PC-3 (cell line): ENCODE measurements at regions of chr6 and their contacts with region 1.

Region 1: DNA sequence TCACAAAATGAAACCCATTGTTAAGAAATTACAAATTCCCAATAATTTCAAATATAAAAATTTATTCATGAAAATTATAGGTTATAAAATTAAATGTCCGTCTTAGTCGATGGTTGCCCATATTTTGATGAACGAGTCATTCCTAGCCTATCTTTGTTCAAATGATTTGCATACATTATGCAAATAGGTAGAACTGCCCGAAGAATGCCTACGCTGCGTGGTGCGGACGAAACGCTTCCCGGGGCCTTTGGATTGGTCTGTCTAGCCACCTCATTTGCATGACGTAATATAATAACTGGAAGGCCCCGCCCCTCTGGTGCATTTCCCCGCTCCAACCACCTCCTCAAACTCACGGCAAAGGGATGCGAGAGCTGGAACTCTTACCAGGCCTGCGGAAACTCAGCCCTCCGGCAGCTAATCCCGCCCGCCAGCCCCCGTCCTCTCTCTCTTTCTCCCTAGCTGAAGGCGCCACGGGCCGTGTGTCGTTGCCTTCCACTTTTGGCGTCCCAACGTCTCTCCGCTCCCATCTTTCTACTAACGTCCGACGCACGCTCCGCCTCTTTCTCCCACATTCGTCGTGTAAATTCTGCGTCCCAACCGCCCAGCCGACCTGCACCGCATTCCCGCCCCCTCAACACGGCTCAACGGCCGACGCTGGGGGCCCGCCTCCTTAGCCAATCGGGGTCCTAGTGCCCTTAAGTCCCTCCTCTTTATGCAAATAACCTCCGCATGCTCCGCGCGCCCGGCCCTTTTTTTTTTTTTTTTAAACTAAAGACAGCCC is 520 bp upstream of the PRRC2A start:
- DNase-seq: peak; percentile 98
- ATAC-seq: peak; percentile 88
- H3K4me3 ChIP-seq: peak overlapping the region; percentile 99
- H3K27ac ChIP-seq: peak overlapping the region; percentile 91
- H3K4me1 ChIP-seq: peaks cover 17% of the 10 kb centered on the region
- H3K27me3 ChIP-seq: no peaks in the 10 kb centered on the region
- CTCF ChIP-seq: no peak

Region 2: DNA sequence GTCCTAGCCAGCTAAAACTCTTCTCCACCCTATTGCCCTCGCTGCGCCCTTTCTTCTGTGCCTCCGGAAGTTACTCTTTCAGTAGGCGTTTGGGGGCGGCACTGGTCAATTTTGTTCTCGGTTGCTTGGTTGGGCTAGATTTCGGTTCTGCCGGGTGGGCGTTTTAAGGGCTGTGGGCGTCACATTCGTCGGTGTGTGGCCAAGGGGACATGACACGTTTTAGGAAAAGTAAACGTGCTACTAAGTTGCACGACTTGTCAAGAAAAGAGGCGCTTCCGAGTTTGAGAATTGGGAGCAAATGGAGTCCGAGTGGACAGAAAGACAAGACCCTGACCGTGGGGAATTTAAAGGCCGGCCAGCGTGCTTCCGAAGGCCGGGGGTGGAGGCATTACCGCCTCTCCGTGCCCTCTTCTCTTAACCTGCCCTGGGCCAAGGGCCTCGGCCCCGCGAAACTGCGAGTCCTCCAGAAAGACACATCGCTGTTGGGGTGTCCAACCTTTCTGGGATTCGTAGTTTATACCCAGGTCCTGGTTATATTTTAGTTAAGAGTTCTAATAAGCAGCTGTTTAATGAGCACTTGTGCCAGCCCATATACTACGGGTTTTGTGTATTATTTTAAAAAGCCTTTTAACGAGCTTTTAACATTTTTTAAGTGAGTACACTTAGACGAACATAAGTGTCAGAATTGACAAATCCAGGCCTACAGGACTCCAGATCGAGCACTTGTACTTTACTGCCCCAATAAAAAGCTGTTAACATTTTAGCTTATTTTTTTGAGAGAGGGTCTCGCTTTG is 33.1 kb after region 1 on chr6:
- CTCF ChIA-PET with region 1: no interaction called
- POLR2A ChIA-PET with region 1: interaction called, 7 read pairs
- intact Hi-C with region 1: loop called (anchors 1 kb)
- DNase-seq: no peak
- ATAC-seq: peak; percentile 66
- H3K4me3 ChIP-seq: peak overlapping the region; percentile 88
- H3K27ac ChIP-seq: peak overlapping the region; percentile 86
- H3K4me1 ChIP-seq: peaks cover 24% of the 10 kb centered on the region
- H3K27me3 ChIP-seq: no peaks in the 10 kb centered on the region
- CTCF ChIP-seq: 0 out of 2 replicates have a peak, but pooled peaks have one; percentile 22

Region 3: GRCh38 chr6:31665501-31666336 is 45.7 kb after region 1 on chr6 and contains the start of gene CSNK2B:
- CTCF ChIA-PET with region 1: no interaction called
- POLR2A ChIA-PET with region 1: no interaction called
- intact Hi-C with region 1: loop called (anchors 1 kb)
- DNase-seq: peak; percentile 97
- ATAC-seq: peak; percentile 80
- H3K4me3 ChIP-seq: peak within 1 kb of the TSS; percentile 92
- H3K27ac ChIP-seq: peak within 1 kb of the TSS; percentile 93
- H3K4me1 ChIP-seq: peaks cover 27% of the 10 kb centered on the region
- H3K27me3 ChIP-seq: no peaks in the 10 kb centered on the region
- CTCF ChIP-seq: no peak
- total RNA-seq, gene CSNK2B: 227 and 267 TPM in 2 replicates